Endothelial cell of umbilical vein (primary cell): ENCODE measurements at regions of chr4 and their contacts with region 1.

Region 1: GRCh38 chr4:174365018-174365587 is 81.4 kb downstream of the CEP44 start:
- DNase-seq: peak; percentile 18
- H3K4me3 ChIP-seq: no peak overlapping the region
- H3K27ac ChIP-seq: no peak overlapping the region
- H3K4me1 ChIP-seq: no peaks in the 10 kb centered on the region
- H3K27me3 ChIP-seq: no peaks in the 10 kb centered on the region
- CTCF ChIP-seq: peak; percentile 11 to 18
- POLR2A ChIP-seq: no peak

Region 2: GRCh38 chr4:174631901-174632758 is 267.0 kb after region 1 on chr4:
- CTCF ChIA-PET with region 1: interaction called, 4 read pairs
- POLR2A ChIA-PET with region 1: no interaction called
- dilution Hi-C with region 1: no loop called
- intact Hi-C with region 1: loop called (anchors 1 kb)
- DNase-seq: peak; percentile 6
- H3K4me3 ChIP-seq: no peak overlapping the region
- H3K27ac ChIP-seq: no peak overlapping the region
- H3K4me1 ChIP-seq: no peaks in the 10 kb centered on the region
- H3K27me3 ChIP-seq: no peaks in the 10 kb centered on the region
- CTCF ChIP-seq: peak in 1 of 2 donors; percentile 22
- POLR2A ChIP-seq: no peak

Region 3: DNA sequence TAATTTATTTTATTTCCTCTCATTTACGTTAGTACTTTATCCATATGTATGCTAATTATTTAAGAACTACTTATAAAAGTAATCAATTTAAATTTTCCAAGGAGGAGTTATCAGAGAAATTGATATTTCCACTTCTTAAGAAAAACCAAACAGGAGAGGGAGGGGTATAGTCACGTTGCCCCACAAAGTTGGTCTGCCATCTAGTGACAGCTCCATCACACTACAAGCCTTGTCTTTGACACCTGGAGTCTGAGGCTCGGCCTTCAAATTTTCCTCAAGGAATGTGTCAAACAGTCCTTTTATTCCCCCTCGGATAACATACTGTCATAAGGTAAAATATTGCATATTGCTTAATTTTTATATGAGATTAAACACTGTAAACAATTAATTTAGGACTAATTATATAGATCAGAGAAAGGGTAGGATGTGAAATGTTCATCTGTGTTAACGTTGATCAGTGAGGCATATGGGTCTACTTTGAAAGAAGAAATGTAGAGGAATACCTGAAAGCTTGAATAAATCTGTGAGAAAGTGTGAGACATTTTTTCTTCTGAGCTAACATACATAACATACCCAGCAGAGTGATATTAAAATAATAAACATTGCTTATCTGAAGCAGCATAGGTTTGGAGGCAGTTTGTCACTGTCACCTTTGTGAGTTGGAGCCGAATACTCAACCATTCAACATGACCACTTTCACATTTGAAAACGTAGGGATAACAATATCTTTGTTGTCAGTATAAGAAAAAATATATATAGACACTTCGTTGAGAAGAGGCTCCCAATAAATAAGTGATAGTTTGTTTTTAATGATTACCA is 349.5 kb after region 1 on chr4:
- CTCF ChIA-PET with region 1: no interaction called
- POLR2A ChIA-PET with region 1: no interaction called
- dilution Hi-C with region 1: no loop called
- intact Hi-C with region 1: loop called (anchors 1 kb)
- DNase-seq: peak; percentile 10
- H3K4me3 ChIP-seq: no peak overlapping the region
- H3K27ac ChIP-seq: no peak overlapping the region
- H3K4me1 ChIP-seq: no peaks in the 10 kb centered on the region
- H3K27me3 ChIP-seq: no peaks in the 10 kb centered on the region
- CTCF ChIP-seq: peak; percentile 30 to 55
- POLR2A ChIP-seq: no peak

Region 4: GRCh38 chr4:175536852-175537453 is 1171.8 kb after region 1 on chr4:
- CTCF ChIA-PET with region 1: no interaction called
- POLR2A ChIA-PET with region 1: no interaction called
- dilution Hi-C with region 1: no loop called
- intact Hi-C with region 1: loop called (anchors 2 kb)
- DNase-seq: no peak
- H3K4me3 ChIP-seq: no peak overlapping the region
- H3K27ac ChIP-seq: no peak overlapping the region
- H3K4me1 ChIP-seq: no peaks in the 10 kb centered on the region
- H3K27me3 ChIP-seq: no peaks in the 10 kb centered on the region
- CTCF ChIP-seq: no peak
- POLR2A ChIP-seq: no peak

Region 5: DNA sequence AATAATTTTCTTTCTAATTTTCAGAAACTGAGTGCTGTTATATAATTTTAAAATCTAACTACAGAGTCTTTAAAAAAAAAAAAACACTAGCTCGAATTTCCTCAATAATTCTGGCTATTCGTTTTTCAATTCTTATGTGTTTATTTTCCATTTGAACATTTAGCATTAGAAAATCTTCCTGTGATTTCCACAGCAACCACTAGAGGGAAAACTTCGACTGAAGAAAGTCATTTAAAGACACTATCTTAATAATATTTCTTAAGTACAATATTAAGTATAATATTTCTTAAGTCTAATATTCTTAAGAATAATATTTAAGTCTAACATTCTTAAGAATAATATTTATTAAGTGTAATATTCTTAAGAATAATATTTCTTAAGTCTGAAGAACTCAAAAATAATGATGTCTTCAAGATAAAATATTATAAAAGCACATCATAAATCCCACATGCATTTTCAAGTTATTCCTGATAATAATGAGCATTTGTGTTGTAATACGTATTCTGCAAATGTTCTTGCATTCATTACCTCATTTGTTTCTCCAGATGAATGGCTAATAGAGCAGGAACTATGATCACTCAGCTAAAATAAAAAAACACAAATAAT is 1582.1 kb after region 1 on chr4:
- CTCF ChIA-PET with region 1: no interaction called
- POLR2A ChIA-PET with region 1: no interaction called
- dilution Hi-C with region 1: no loop called
- intact Hi-C with region 1: loop called (anchors 5 kb)
- DNase-seq: peak; percentile 54
- H3K4me3 ChIP-seq: peak overlapping the region in 1 of 3 experiments; percentile 39
- H3K27ac ChIP-seq: no peak overlapping the region
- H3K4me1 ChIP-seq: peaks cover 3% of the 10 kb centered on the region
- H3K27me3 ChIP-seq: no peaks in the 10 kb centered on the region
- CTCF ChIP-seq: peak; percentile 28 to 37
- POLR2A ChIP-seq: no peak

Region 6: GRCh38 chr4:176123710-176124407 is 1758.8 kb after region 1 on chr4:
- CTCF ChIA-PET with region 1: no interaction called
- POLR2A ChIA-PET with region 1: no interaction called
- dilution Hi-C with region 1: no loop called
- intact Hi-C with region 1: loop called (anchors 10 kb)
- DNase-seq: peak; percentile 5
- H3K4me3 ChIP-seq: no peak overlapping the region
- H3K27ac ChIP-seq: no peak overlapping the region
- H3K4me1 ChIP-seq: no peaks in the 10 kb centered on the region
- H3K27me3 ChIP-seq: no peaks in the 10 kb centered on the region
- CTCF ChIP-seq: peak; percentile 50 to 57
- POLR2A ChIP-seq: no peak